ENCODE measurements at regions of chr7 and their contacts with region 1.

Region 1: DNA sequence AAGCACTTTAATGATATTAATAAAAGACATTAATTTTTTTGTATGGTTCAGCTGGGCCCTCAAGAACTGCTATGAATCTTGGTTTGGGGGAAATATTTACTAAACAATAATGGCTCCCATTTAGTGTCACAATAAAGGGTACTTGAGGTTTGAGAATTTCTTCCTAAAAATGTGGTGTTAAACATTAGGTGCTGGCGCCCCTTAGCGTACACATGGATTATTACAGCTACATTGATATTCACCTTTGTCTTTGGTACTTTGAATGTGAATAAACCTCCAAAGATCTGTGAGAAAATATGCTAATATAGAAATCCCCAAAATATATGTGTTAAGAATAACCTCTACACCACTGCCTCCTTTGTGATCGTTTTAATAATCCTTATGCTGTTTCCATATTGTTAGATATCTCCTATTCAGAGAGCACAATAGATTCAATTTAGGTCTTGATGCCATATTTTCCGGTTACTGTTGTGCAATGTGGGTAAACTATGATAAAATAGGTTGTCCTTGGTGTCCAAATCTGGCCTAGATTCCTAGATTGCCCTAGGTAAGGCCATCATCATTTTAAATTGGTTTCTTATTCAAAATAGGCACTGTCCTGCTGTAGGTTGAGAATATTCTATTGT is 161.8 kb upstream of the CACNA2D1 start:
- DNase-seq: peak; percentile 68

Region 2: DNA sequence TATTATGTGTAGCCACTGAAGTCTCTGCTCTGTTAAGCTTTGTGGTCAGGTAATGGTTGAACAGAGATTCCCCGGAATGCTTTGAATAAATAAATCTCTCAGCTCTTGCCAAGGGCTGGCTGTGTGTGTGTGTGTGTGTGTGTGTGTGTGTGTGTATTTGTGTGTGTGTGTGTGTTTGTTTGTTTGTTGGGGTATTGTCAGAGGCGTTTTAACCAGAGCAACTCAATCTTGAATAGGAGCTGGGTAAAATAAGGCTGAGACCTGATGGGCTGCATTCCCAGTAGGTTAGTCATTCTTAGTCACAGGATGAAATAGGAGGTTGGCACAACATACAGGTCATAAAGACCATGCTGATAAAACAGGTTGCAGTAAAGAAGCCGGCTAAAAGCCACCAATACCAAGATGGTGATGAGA is 94.4 kb after region 1 on chr7:
- in situ Hi-C with region 1: loop called (anchors 25 kb)
- DNase-seq: no peak

Measured in KBM-7 (cell line).